ENCODE measurements at regions of chr7 and their contacts with region 1.

Region 1: GRCh38 chr7:105776058-105776751 is 100.2 kb downstream of the ATXN7L1 start:
- DNase-seq: peak; percentile 73 to 74
- ATAC-seq: peak; percentile 93 to 95
- H3K4me3 ChIP-seq: no peak overlapping the region
- H3K27ac ChIP-seq: peak overlapping the region; percentile 16 to 60 (median 36)
- H3K4me1 ChIP-seq: peaks cover 22 to 23% of the 10 kb centered on the region in 2 donors
- H3K27me3 ChIP-seq: no peaks in the 10 kb centered on the region
- CTCF ChIP-seq: no peak
- POLR2A ChIP-seq: no peak

Region 2: DNA sequence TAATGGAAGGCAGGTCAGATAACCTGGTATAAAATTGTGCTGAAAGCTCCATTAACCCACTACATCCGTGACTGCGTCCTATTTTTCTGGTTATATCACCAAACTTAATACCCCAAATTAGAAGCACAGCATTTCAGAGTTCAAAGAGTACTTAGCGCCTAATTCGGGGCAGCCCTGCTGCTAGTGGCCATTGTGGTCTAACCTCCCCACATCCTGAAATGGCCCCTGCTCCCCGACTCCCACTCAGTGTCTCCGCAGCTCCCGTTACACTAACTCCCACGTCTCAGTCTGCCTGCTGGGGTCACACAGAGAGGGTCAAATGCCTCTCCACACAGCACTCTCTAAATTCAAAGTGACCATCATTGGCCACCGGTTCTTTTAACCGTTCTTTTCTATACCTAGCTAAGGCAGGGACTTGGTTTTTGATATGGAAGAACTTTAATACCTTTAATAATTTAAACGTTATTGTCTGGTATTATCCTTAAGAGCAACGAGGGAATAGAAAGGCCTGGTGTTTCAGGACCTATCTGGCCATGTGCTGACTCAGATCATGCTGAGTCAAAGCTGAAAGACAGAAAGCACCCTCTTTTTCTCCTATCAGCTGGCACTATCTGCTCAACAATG is 645.1 kb before region 1 on chr7:
- in situ Hi-C with region 1: no loop called
- intact Hi-C with region 1: no loop called
- DNase-seq: no peak
- ATAC-seq: no peak
- H3K4me3 ChIP-seq: no peak overlapping the region
- H3K27ac ChIP-seq: no peak overlapping the region
- H3K4me1 ChIP-seq: peaks cover 13% of the 10 kb centered on the region in 2 donors
- H3K27me3 ChIP-seq: no peaks in the 10 kb centered on the region
- CTCF ChIP-seq: no peak
- POLR2A ChIP-seq: no peak

Region 3: GRCh38 chr7:105673367-105674142 is 102.7 kb before region 1 on chr7:
- in situ Hi-C with region 1: no loop called
- intact Hi-C with region 1: loop called (anchors 5 kb)
- DNase-seq: peak; percentile 46 to 81
- ATAC-seq: peak; percentile 81 to 88
- H3K4me3 ChIP-seq: no peak overlapping the region
- H3K27ac ChIP-seq: peak overlapping the region; percentile 70 to 80 (median 77)
- H3K4me1 ChIP-seq: peaks cover 37 to 48% of the 10 kb centered on the region in 2 donors
- H3K27me3 ChIP-seq: no peaks in the 10 kb centered on the region
- CTCF ChIP-seq: no peak
- POLR2A ChIP-seq: no peak

Region 4: GRCh38 chr7:106139265-106140251 is 363.4 kb after region 1 on chr7:
- in situ Hi-C with region 1: no loop called
- intact Hi-C with region 1: loop called (anchors 10 kb)
- DNase-seq: peak; percentile 84 to 88
- ATAC-seq: peak; percentile 91 to 93
- H3K4me3 ChIP-seq: peak overlapping the region; percentile 7 to 26 (median 10)
- H3K27ac ChIP-seq: peak overlapping the region; percentile 91 to 98 (median 93)
- H3K4me1 ChIP-seq: peaks cover 32 to 38% of the 10 kb centered on the region in 2 donors
- H3K27me3 ChIP-seq: no peaks in the 10 kb centered on the region
- CTCF ChIP-seq: peak in 1 of 5 experiments; percentile 9
- POLR2A ChIP-seq: peak in 1 of 2 donors; percentile 64

Measured in gastrocnemius medialis (tissue), 4 donors.